ENCODE measurements at regions of chr10 and their contacts with region 1.

Region 1: DNA sequence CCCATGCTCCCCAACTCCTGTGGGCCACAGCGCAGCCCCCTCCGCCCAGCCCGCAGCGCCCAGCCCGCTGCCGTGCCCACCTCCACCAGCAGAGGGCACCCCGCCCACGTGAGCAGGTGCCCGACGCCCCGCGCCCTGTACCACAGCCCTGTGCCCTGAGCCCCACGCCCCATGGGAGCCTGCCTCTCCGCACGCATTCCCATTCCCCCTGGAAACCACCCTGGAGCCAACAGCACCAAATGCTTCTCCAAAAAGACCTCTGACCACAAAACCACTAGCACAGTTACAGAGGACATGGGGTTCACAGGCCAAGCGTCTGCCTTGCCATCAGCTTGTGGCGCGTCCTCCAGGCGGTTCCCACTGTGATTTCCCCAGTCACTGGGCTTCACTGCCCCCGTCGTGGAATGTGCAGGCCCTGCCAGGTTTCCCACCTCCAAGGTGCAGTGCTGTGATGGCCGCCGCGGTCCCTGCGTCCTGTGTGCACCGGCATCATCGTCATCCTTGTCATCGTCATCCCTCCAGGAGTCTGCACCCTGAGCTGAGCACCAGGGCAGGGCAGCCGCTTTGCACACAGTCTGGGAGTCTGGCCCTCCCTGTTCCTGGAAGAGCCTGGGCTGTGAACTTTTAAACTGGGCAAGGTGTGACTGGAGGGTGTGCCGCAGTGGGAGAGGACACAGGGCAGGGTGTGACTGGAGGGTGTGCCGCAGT is 61.7 kb downstream of the PWWP2B start:
- DNase-seq: peak; percentile 46 to 73
- ATAC-seq: peak; percentile 41 to 71 (median 57)
- H3K4me3 ChIP-seq: no peak overlapping the region
- H3K27ac ChIP-seq: no peak overlapping the region
- H3K4me1 ChIP-seq: peaks cover 14 to 41% (median 33%) of the 10 kb centered on the region in 9 donors
- H3K27me3 ChIP-seq: peaks cover 0 to 14% (median 6%) of the 10 kb centered on the region in 7 donors
- CTCF ChIP-seq: peak; percentile 91 to 99 (median 97)

Region 2: DNA sequence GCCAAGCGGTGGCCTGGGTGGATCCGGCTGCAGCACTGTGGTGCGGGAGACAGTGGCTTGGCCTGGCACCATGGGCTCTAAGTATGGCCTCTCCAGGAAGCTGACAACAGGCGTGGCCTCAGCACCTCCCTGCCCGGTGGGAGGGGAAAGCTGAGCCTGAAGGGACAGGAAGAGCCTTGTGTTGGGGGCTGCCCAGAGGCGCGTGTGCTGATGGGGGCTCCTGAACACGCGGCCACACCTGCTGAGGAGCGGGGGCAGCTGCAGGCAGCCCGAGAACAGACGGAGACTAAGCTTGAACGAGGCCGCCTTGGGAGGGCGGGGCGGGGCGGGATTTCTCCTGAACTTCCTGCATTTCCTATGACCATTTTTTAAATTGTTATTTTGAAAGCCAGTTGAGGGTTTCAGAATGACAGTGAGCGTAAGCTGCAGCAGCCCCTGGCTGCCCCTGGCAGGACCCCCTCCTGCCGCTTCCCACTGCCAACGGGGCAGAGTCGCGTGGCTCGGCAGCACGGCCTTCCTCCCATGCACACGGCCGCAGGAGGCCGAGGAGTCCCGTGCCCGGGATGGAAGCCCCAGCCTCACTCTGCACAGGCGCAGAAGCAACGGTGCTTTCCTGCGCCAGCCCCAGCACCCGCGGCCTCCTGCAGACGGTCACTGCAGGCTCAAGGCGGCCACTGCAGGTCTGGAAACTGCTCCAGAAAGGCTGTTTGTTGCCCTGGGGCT is 228.8 kb before region 1 on chr10:
- intact Hi-C with region 1: loop called in 3 of 10 experiments (anchors 5 to 10 kb)
- DNase-seq: peak in 1 of 2 donors; percentile 43
- ATAC-seq: peak in 7 of 8 donors; percentile 32 to 77 (median 60)
- H3K4me3 ChIP-seq: peak overlapping the region in 9 of 10 donors; percentile 16 to 51 (median 41)
- H3K27ac ChIP-seq: peak overlapping the region in 7 of 10 donors; percentile 9 to 86 (median 45)
- H3K4me1 ChIP-seq: peaks cover 0 to 52% (median 0%) of the 10 kb centered on the region in 9 donors
- H3K27me3 ChIP-seq: no peaks in the 10 kb centered on the region
- CTCF ChIP-seq: no peak

Region 3: GRCh38 chr10:132421392-132421877 is 37.3 kb before region 1 on chr10:
- intact Hi-C with region 1: no loop called
- DNase-seq: peak; percentile 77 to 79
- ATAC-seq: peak; percentile 87 to 94 (median 90)
- H3K4me3 ChIP-seq: peak overlapping the region in 6 of 10 donors; percentile 13 to 28 (median 18)
- H3K27ac ChIP-seq: peak overlapping the region; percentile 75 to 94 (median 88)
- H3K4me1 ChIP-seq: peaks cover 23 to 68% (median 43%) of the 10 kb centered on the region in 9 donors
- H3K27me3 ChIP-seq: no peaks in the 10 kb centered on the region
- CTCF ChIP-seq: no peak

Region 4: GRCh38 chr10:132506711-132507408 is 48.1 kb after region 1 on chr10:
- intact Hi-C with region 1: loop called in 3 of 10 experiments (anchors 2 to 10 kb)
- DNase-seq: no peak
- ATAC-seq: peak in 6 of 8 donors; percentile 6 to 62 (median 23)
- H3K4me3 ChIP-seq: no peak overlapping the region
- H3K27ac ChIP-seq: peak overlapping the region in 7 of 10 donors; percentile 25 to 74 (median 66)
- H3K4me1 ChIP-seq: peaks cover 9 to 65% (median 36%) of the 10 kb centered on the region in 9 donors
- H3K27me3 ChIP-seq: no peaks in the 10 kb centered on the region
- CTCF ChIP-seq: no peak

Region 5: GRCh38 chr10:132516771-132517725 is 58.3 kb after region 1 on chr10:
- intact Hi-C with region 1: loop called in 3 of 10 experiments (anchors 5 to 10 kb)
- DNase-seq: peak; percentile 93 to 95
- ATAC-seq: peak; percentile 84 to 93 (median 88)
- H3K4me3 ChIP-seq: peak overlapping the region; percentile 26 to 55 (median 41)
- H3K27ac ChIP-seq: peak overlapping the region; percentile 76 to 98 (median 96)
- H3K4me1 ChIP-seq: peaks cover 46 to 76% (median 68%) of the 10 kb centered on the region in 9 donors
- H3K27me3 ChIP-seq: no peaks in the 10 kb centered on the region
- CTCF ChIP-seq: no peak

Region 6: DNA sequence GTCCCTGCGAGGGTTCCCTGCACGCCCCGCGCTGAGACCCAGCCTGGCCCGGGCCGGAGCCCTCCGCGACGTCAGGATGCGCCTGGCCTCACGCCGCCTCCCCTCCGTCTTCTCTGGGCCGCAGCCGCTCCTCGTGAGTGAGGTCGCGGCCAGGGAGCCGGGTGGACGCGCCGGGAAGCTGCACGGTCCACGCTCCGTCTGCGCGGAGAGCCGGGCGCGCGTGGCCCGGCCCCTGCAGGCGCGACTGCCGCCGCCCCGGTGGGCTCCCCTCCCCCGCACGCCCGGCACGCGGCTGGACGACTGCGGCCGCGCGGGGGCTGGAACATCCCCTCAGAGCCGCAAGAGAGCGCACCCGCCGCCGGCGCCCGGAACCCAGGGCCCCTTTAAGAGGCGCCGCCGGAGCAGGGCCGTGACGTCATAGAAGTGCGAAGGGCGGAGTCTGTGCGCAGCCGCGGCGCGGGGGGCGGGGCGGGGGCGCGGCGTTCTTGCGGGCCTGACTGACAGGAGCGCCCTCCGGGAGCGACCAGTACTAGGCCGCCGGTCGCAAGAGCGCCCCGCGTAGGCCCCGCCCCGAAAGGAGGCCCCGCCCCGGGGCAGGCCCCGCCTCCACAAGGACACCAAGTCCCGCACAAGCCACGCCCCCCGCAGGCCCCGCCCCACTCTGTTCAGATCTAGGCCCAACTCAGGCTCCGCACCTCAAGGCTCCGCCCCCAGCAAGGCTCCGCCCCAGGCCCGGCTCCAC is 78.4 kb after region 1 on chr10:
- intact Hi-C with region 1: loop called in 5 of 10 experiments (anchors 5 to 10 kb)
- DNase-seq: peak; percentile 100
- ATAC-seq: peak; percentile 94 to 97 (median 95)
- H3K4me3 ChIP-seq: peak overlapping the region; percentile 52 to 86 (median 72)
- H3K27ac ChIP-seq: peak overlapping the region; percentile 75 to 97 (median 90)
- H3K4me1 ChIP-seq: peaks cover 24 to 56% (median 54%) of the 10 kb centered on the region in 9 donors
- H3K27me3 ChIP-seq: no peaks in the 10 kb centered on the region
- CTCF ChIP-seq: peak; percentile 22 to 65 (median 44)

Region 7: GRCh38 chr10:132571650-132572535 is 113.1 kb after region 1 on chr10:
- intact Hi-C with region 1: loop called in 6 of 10 experiments (anchors 5 kb)
- DNase-seq: peak in 1 of 2 donors; percentile 64
- ATAC-seq: peak; percentile 44 to 95 (median 81)
- H3K4me3 ChIP-seq: no peak overlapping the region
- H3K27ac ChIP-seq: peak overlapping the region in 9 of 10 donors; percentile 7 to 58 (median 45)
- H3K4me1 ChIP-seq: peaks cover 35 to 56% (median 51%) of the 10 kb centered on the region in 9 donors
- H3K27me3 ChIP-seq: no peaks in the 10 kb centered on the region
- CTCF ChIP-seq: no peak

Region 8: GRCh38 chr10:132616170-132616995 is 157.6 kb after region 1 on chr10:
- intact Hi-C with region 1: no loop called
- DNase-seq: no peak
- ATAC-seq: peak in 1 of 8 donors; percentile 19
- H3K4me3 ChIP-seq: no peak overlapping the region
- H3K27ac ChIP-seq: no peak overlapping the region
- H3K4me1 ChIP-seq: peaks cover 0 to 26% (median 11%) of the 10 kb centered on the region in 9 donors
- H3K27me3 ChIP-seq: no peaks in the 10 kb centered on the region
- CTCF ChIP-seq: no peak

Region 9: DNA sequence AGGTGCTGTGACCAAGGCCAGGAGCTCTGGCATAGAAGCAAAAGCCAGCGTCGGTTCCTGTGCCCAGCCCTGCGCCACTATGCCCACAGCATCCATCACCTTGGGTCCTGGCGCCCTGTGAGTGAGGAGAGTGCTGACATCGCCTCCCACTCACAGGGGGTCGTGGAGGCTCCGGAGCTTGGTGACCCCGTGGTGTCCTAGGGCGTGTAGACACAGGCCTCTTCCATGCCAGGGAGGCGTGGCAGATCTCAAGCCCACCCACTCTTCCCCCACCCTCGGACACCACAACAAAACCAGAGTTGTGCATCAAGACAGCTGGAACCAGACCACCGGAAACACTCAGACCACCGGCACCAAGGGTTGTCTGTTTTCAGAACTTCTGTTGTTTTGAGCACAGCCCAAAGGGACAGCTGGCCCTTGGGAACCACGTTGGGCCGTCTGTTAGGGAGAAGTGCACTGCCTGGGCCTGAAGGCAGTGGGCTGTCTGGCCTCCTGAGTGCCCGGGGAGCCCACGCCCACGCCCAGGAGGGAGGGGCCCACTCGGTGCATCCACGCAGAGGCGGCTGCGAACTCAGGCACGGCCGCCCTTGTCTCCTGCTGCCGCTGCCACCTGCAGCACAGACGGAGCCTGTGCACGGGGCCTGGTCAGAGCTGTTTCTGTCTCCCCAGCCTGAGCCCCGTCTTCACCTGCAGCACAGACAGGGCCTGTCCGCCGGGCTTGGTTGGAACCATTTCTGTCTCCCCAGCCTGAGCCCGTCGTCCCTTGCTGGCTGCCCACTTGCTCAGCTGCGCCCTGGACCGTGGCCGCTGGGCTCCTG is 185.2 kb after region 1 on chr10:
- intact Hi-C with region 1: loop called in 3 of 10 experiments (anchors 2 to 5 kb)
- DNase-seq: no peak
- ATAC-seq: peak in 2 of 8 donors; percentile 26
- H3K4me3 ChIP-seq: no peak overlapping the region
- H3K27ac ChIP-seq: no peak overlapping the region
- H3K4me1 ChIP-seq: peaks cover 0 to 16% (median 0%) of the 10 kb centered on the region in 9 donors
- H3K27me3 ChIP-seq: no peaks in the 10 kb centered on the region
- CTCF ChIP-seq: no peak